ENCODE measurements at regions of chr5 and their contacts with region 1.

Region 1: DNA sequence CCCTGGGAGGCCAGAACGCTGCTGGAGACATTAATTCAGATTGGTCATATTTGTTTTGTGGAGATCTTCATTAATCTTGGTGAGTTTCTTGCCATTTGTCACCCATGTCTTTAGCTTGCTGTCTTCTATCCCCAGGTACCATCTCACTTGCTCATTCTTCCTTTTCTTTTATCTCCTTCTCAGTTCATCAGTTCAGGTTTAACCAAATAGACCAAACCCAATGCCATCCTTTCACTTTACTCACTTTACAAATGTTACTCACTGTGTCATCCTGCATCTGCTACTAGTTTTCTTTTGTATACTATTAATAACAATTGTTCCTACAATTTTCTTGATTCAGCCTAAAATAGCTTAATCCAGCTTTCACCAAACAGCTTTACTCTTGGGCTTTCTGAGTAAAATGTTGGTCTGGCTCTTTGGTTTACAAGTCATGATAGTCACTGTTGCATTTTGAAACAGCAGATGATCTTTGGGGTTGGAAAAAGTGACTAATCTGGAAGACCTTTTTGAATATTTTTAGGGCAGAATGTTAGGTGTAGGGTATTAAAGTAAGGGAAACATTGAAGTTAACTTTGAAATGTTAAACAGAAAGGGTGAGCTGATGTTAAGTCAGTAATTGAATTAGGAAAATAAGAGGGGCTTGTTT is 246.9 kb downstream of the ZSWIM6 start:
- DNase-seq: no peak
- ATAC-seq: peak; percentile 87
- H3K4me3 Mint-ChIP-seq: no peak overlapping the region
- H3K27ac Mint-ChIP-seq: no peak overlapping the region
- H3K4me1 Mint-ChIP-seq: no peaks in the 10 kb centered on the region
- H3K27me3 Mint-ChIP-seq: peaks cover 4% of the 10 kb centered on the region

Region 2: DNA sequence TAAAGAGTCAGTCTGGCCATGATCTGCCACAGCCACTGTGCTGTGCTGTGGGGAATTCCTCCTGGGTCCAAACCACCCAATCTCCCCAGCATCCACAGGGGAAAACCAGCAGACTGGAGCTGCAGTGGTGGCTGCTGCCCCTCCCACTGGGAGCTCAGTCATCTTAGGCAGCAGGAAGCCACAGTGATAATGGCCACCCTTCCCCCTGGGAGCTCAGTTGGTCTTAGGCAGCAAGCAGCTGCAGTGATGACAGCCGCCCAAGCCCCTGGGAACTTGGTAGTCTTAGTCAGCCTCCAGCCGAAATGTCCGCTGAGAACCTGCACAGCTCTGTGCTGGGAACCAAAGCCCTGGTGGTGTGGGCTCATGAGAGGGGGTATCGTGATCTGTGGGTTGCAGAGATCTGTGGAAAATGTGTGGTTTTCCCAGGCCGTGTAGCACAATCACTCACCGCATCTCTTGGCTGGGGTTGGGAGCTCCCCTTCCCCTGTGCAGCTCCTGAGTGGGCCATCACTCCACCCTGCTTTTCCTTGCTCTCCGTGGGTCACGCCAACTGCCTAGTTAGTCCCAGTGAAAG is 378.3 kb before region 1 on chr5:
- CTCF ChIA-PET with region 1: no interaction called
- POLR2A ChIA-PET with region 1: no interaction called
- intact Hi-C with region 1: loop called in 1 of 2 experiments (anchors 1 kb)
- DNase-seq: no peak
- ATAC-seq: no peak
- H3K4me3 Mint-ChIP-seq: no peak overlapping the region
- H3K27ac Mint-ChIP-seq: no peak overlapping the region
- H3K4me1 Mint-ChIP-seq: peaks cover 14% of the 10 kb centered on the region
- H3K27me3 Mint-ChIP-seq: peaks cover 39% of the 10 kb centered on the region

Region 3: DNA sequence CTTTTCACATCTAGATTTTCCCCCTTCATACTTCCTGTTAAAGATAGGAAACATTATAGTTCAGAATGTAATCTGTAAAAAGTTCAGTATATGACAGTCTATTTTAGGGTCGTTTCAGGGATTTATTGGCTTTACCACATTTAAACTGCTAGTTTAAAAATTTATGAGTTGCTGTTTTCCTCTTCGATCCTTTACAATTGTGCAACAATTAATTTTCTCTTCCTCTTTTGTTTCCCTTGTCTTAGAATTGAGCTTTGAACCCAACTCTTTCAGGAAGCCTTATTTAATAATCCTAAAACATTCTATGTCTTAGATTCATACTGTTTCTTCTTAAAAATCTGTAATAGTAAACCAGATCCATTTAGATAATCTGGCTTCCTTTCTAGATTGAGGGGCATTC is 230.5 kb before region 1 on chr5:
- CTCF ChIA-PET with region 1: no interaction called
- POLR2A ChIA-PET with region 1: no interaction called
- intact Hi-C with region 1: no loop called
- DNase-seq: no peak
- ATAC-seq: no peak
- H3K4me3 Mint-ChIP-seq: no peak overlapping the region
- H3K27ac Mint-ChIP-seq: no peak overlapping the region
- H3K4me1 Mint-ChIP-seq: peaks cover 20% of the 10 kb centered on the region
- H3K27me3 Mint-ChIP-seq: no peaks in the 10 kb centered on the region

Region 4: GRCh38 chr5:61534481-61535267 is 44.3 kb before region 1 on chr5:
- CTCF ChIA-PET with region 1: no interaction called
- POLR2A ChIA-PET with region 1: no interaction called
- intact Hi-C with region 1: loop called in 1 of 2 experiments (anchors 2 kb)
- DNase-seq: peak; percentile 18
- ATAC-seq: peak; percentile 83
- H3K4me3 Mint-ChIP-seq: no peak overlapping the region
- H3K27ac Mint-ChIP-seq: no peak overlapping the region
- H3K4me1 Mint-ChIP-seq: peaks cover 18% of the 10 kb centered on the region
- H3K27me3 Mint-ChIP-seq: no peaks in the 10 kb centered on the region

Measured in activated CD4-positive, alpha-beta T cell treated with anti-CD3 and anti-CD28 coated beads for 36 hours (primary cell).